ENCODE measurements at regions of chr2 and their contacts with region 1.

Region 1: GRCh38 chr2:112254466-112255239 is at the start of gene ZC3H8:
- DNase-seq: peak; percentile 80
- ATAC-seq: peak; percentile 96
- H3K4me3 ChIP-seq: peak within 1 kb of the TSS; percentile 72
- H3K27ac ChIP-seq: peak within 1 kb of the TSS; percentile 85
- H3K4me1 ChIP-seq: peaks cover 3% of the 10 kb centered on the region; the same call in 1 of the 2 replicates
- H3K27me3 ChIP-seq: no peaks in the 10 kb centered on the region
- CTCF ChIP-seq: peak; percentile 5 to 30 (median 13); a peak in 2 of 6 replicates
- EP300 ChIP-seq: no peak
- POLR2A ChIP-seq: peak; percentile 94
- RAD21 ChIP-seq: no peak
- polyA plus RNA-seq, gene ZC3H8: 16.5 to 16.6 TPM

Region 2: GRCh38 chr2:111918383-111918806 is 336.3 kb before region 1 on chr2:
- CTCF ChIA-PET with region 1: no interaction called
- POLR2A ChIA-PET with region 1: no interaction called
- RAD21 ChIA-PET with region 1: no interaction called
- SMC1A ChIA-PET with region 1: no interaction called
- in situ Hi-C with region 1: no loop called
- intact Hi-C with region 1: no loop called
- DNase-seq: no peak
- ATAC-seq: no peak
- H3K4me3 ChIP-seq: no peak overlapping the region
- H3K27ac ChIP-seq: no peak overlapping the region
- H3K4me1 ChIP-seq: no peaks in the 10 kb centered on the region
- H3K27me3 ChIP-seq: no peaks in the 10 kb centered on the region
- CTCF ChIP-seq: no peak
- EP300 ChIP-seq: no peak
- POLR2A ChIP-seq: no peak
- RAD21 ChIP-seq: no peak

Region 3: DNA sequence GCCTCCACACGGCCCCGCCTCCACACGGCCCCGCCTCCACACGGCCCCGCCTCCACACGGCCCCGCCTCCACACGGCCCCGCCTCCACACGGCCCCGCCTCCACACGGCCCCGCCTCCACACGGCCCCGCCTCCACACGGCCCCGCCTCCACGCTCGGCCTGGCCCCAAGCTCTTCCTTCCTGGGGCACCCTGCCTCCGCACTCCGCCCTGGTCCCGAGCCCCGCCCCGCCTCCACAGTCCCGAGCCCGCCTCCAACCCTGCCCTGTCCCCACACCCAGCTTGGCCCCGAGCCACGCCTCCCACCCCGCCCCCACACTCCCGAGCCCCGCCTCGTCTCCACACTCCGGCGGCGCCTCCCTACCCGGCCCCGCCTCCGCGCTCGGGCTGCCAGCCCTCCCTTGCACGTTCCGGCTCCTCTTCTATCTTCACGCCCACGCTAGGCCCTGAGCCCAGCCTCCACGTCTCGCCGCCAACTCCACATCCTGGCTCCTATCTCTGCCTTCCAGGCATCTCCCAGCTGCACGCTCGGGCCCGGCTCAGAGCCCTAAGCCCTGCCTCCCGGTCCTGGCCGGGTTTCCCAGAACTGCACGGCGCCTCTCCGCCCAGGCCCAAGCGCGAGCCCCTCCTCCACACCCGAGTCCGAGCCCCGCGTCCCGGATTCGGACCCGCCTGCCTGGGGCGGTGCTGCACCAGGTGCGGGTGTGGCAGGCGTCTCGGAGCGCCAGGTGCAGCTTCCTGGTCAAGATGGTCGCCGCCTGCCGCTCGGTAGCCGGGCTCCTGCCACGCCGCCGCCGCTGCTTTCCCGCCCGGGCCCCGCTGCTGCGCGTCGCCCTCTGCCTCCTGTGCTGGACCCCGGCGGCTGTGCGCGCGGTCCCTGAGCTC is 199.6 kb before region 1 on chr2 and contains the start of gene TMEM87B:
- CTCF ChIA-PET with region 1: interaction called, 6 read pairs
- POLR2A ChIA-PET with region 1: interaction called, 6 read pairs
- RAD21 ChIA-PET with region 1: interaction called, 5 read pairs
- SMC1A ChIA-PET with region 1: no interaction called
- in situ Hi-C with region 1: no loop called
- intact Hi-C with region 1: loop called (anchors 5 kb)
- DNase-seq: peak; percentile 86
- ATAC-seq: peak; percentile 79
- H3K4me3 ChIP-seq: peak within 1 kb of the TSS; percentile 90
- H3K27ac ChIP-seq: peak within 1 kb of the TSS; percentile 64
- H3K4me1 ChIP-seq: peaks cover 5% of the 10 kb centered on the region
- H3K27me3 ChIP-seq: no peaks in the 10 kb centered on the region
- CTCF ChIP-seq: no peak
- EP300 ChIP-seq: 0 out of 4 replicates have a peak, but pooled peaks of 1 of the 2 experiments have one; percentile 32
- POLR2A ChIP-seq: peak; percentile 86
- RAD21 ChIP-seq: no peak
- polyA plus RNA-seq, gene TMEM87B: 5.7 to 8.2 TPM

Region 4: DNA sequence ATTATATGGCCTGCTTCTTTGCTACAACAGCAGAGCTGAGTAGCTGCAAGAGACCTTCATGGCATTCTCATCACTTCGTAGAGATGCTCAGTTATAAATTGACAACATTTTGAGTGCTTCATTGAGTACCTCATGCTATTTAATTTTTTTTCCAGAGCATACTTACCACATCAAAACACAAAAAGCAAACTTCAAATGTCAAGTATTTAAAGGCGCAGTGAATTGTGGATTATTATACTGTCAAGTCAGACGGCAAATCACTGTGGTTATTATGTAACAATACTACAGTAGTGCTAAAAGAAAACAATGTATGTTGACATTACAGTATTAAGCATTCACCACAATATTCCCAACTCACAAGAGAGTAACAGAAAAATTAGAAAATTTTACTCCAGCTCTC is 12.3 kb before region 1 on chr2:
- CTCF ChIA-PET with region 1: interaction called, 14 read pairs
- POLR2A ChIA-PET with region 1: interaction called, 3 read pairs
- RAD21 ChIA-PET with region 1: no interaction called
- SMC1A ChIA-PET with region 1: interaction called, 17 read pairs
- in situ Hi-C with region 1: no loop called
- intact Hi-C with region 1: no loop called
- DNase-seq: no peak
- ATAC-seq: no peak
- H3K4me3 ChIP-seq: no peak overlapping the region
- H3K27ac ChIP-seq: no peak overlapping the region
- H3K4me1 ChIP-seq: no peaks in the 10 kb centered on the region
- H3K27me3 ChIP-seq: no peaks in the 10 kb centered on the region
- CTCF ChIP-seq: no peak
- EP300 ChIP-seq: no peak
- POLR2A ChIP-seq: no peak
- RAD21 ChIP-seq: no peak

Region 5: DNA sequence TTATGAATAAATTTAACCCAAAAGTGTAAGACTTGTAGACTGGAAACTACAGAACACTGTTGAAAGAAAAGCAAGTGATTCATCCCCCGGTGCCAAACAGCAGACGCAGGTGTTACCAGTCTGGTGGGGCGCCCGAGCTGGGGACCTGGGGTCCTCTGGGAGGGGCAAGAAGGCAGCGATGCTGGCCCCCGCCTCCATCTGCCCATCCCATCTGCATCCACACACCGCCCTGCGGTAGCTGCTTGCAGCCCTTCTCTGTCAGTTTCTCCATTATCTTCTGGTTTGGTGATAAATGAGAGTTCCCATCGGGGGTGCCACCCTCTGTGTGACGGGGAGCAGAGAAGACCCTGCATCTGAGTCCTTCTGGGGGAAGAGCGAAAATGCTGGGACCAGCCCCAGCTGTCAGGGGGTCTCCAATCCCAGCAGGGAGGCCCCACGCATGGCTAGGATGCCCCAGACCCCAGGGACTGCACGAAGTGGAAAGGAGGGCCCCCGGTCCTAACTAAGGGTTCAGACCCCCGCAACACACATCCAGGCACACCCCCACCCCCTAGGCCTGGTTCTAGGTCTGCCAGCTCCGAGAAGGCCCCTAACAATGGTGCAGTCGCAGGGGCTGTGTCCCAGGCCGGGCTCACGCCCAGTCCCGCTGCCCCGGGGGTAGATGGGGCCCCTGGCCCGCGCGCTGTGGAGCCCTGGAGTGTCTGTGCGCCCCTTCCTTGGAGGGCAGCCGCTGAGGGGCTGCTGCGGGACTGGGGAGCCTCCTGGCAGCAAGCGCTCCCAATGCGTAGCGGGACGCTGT is 179.5 kb after region 1 on chr2:
- CTCF ChIA-PET with region 1: interaction called, 7 read pairs
- POLR2A ChIA-PET with region 1: no interaction called
- RAD21 ChIA-PET with region 1: interaction called, 10 read pairs
- SMC1A ChIA-PET with region 1: interaction called, 4 read pairs
- in situ Hi-C with region 1: no loop called
- intact Hi-C with region 1: loop called (anchors 5 kb)
- DNase-seq: no peak
- ATAC-seq: no peak
- H3K4me3 ChIP-seq: no peak overlapping the region
- H3K27ac ChIP-seq: no peak overlapping the region
- H3K4me1 ChIP-seq: no peaks in the 10 kb centered on the region
- H3K27me3 ChIP-seq: no peaks in the 10 kb centered on the region
- CTCF ChIP-seq: no peak
- EP300 ChIP-seq: no peak
- POLR2A ChIP-seq: no peak
- RAD21 ChIP-seq: no peak

Region 6: DNA sequence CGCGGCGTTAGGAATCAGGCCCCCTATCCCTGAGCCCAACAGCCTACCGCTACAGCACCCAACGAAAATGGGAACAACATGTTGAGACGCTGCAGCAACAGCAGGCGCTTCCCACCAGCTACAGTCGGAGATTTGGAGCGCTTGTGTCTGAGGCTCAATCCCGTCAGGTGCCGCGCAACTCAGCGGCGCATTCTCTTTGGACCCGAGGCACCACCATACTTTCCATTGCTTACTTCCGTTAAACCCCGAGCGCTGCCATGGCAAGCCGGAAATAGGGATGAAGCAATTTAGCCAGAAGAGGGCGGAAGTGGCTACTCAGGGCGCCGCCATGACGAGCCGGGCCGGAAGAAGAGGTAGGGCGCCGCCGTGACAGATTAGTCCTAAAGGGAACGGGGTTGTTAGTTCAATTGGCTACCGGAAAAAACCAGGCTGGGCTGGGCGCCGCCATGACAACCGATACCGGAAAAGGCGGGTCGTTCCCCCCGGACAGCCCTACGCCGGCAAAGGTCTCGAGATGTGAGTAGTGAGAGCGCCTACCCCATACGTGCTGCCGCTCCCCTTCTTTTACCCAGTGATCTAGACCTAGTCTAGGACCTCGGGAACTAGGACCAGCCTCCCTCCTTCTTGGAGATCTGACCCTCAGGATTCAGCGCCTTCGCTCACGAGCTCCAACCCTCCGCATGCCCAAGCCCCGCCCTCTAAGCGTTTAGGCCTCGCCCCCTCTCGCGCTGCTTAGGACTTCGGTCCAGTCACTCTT is 329.7 kb after region 1 on chr2 and contains the start of gene CHCHD5:
- CTCF ChIA-PET with region 1: interaction called, 7 read pairs
- POLR2A ChIA-PET with region 1: no interaction called
- RAD21 ChIA-PET with region 1: interaction called, 11 read pairs
- SMC1A ChIA-PET with region 1: interaction called, 4 read pairs
- in situ Hi-C with region 1: no loop called
- intact Hi-C with region 1: loop called (anchors 2 kb)
- DNase-seq: peak; percentile 81
- ATAC-seq: peak; percentile 91
- H3K4me3 ChIP-seq: peak within 1 kb of the TSS; percentile 89
- H3K27ac ChIP-seq: peak within 1 kb of the TSS; percentile 95
- H3K4me1 ChIP-seq: peaks cover 20% of the 10 kb centered on the region
- H3K27me3 ChIP-seq: no peaks in the 10 kb centered on the region
- CTCF ChIP-seq: peak in 1 of 3 experiments; percentile 21; a peak in 2 of 6 replicates
- EP300 ChIP-seq: no peak
- POLR2A ChIP-seq: peak; percentile 83
- RAD21 ChIP-seq: no peak
- polyA plus RNA-seq, gene CHCHD5: 65.1 to 85.6 TPM